Panc1 (cell line): ENCODE measurements at regions of chr13 and their contacts with region 1.

Region 1: DNA sequence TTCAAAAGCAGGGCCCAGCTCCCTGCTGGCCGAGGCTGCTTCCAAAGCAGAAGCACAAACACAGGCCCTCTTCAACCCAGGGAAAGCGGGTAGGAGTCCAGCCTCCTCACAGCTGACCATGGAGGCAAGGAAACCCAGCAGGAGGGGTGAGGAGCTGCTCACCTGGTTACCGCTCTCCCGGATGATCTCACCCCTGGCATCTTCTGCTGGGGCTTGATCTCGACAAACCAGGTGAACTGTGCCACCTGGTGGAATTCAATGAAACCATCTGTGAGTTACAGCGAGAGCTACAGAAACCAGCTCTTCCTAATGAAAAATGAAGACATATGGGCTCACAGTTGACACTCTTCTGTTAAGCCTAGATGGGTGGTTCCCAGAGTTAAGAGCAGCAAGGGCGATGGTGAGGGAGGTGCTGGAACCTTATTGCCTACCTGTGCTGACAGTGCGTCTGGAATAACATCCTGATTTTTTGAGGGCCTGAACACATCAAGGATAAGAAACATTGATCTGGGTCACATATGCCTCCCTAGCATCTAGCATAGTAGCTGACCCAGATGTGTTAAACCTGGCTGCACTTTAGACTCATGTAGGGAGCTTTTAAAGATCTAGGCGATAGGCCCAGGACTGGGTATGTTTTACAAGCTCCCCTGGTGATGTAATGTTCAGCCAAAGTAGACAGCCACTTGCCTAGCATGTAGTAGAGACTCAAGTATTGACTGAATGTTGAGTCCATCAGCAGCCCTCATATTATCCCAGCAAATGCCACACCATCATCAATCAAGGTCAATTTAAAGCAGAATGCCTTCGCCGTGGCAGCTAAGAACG is 6.1 kb downstream of the DHRS12 start:
- DNase-seq: no peak
- ATAC-seq: peak; percentile 85
- H3K4me3 ChIP-seq: no peak overlapping the region
- H3K27ac ChIP-seq: no peak overlapping the region
- H3K4me1 ChIP-seq: peaks cover 12% of the 10 kb centered on the region
- H3K27me3 ChIP-seq: no peaks in the 10 kb centered on the region
- CTCF ChIP-seq: peak; percentile 71

Region 2: DNA sequence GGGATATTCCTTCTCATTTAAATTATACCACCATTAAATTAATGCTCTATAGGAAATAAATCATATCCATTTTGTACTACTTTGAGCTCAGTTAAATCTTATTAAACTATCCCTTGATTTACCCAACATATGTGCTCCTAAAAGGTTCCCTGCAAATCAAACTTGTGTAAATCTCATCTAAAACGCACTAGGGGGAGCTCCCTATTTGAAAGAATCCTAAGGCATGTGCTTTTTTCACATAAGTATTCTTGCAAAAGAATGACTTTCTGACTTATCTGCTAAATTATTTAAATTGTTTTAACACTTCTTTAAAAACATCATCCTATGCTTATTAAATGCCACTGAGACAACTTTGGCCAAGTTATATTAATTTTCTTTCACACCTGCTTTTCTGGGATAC is 353.0 kb before region 1 on chr13:
- CTCF ChIA-PET with region 1: no interaction called
- POLR2A ChIA-PET with region 1: no interaction called
- in situ Hi-C with region 1: no loop called
- intact Hi-C with region 1: loop called (anchors 5 kb)
- DNase-seq: no peak
- ATAC-seq: no peak
- H3K4me3 ChIP-seq: no peak overlapping the region
- H3K27ac ChIP-seq: no peak overlapping the region
- H3K4me1 ChIP-seq: no peaks in the 10 kb centered on the region
- H3K27me3 ChIP-seq: no peaks in the 10 kb centered on the region
- CTCF ChIP-seq: peak; percentile 22; the same call in 1 of the 2 replicates

Region 3: GRCh38 chr13:51465124-51465523 is 332.8 kb before region 1 on chr13:
- CTCF ChIA-PET with region 1: no interaction called
- POLR2A ChIA-PET with region 1: interaction called, 11 read pairs
- in situ Hi-C with region 1: no loop called
- intact Hi-C with region 1: no loop called
- DNase-seq: no peak
- ATAC-seq: no peak
- H3K4me3 ChIP-seq: no peak overlapping the region
- H3K27ac ChIP-seq: no peak overlapping the region
- H3K4me1 ChIP-seq: no peaks in the 10 kb centered on the region
- H3K27me3 ChIP-seq: no peaks in the 10 kb centered on the region
- CTCF ChIP-seq: no peak

Region 4: GRCh38 chr13:52760077-52760476 is 962.2 kb after region 1 on chr13:
- CTCF ChIA-PET with region 1: no interaction called
- POLR2A ChIA-PET with region 1: no interaction called
- in situ Hi-C with region 1: no loop called
- intact Hi-C with region 1: no loop called
- DNase-seq: no peak
- ATAC-seq: no peak
- H3K4me3 ChIP-seq: no peak overlapping the region
- H3K27ac ChIP-seq: no peak overlapping the region
- H3K4me1 ChIP-seq: no peaks in the 10 kb centered on the region
- H3K27me3 ChIP-seq: no peaks in the 10 kb centered on the region
- CTCF ChIP-seq: no peak